ENCODE measurements at regions of chr21 and their contacts with region 1.

Region 1: DNA sequence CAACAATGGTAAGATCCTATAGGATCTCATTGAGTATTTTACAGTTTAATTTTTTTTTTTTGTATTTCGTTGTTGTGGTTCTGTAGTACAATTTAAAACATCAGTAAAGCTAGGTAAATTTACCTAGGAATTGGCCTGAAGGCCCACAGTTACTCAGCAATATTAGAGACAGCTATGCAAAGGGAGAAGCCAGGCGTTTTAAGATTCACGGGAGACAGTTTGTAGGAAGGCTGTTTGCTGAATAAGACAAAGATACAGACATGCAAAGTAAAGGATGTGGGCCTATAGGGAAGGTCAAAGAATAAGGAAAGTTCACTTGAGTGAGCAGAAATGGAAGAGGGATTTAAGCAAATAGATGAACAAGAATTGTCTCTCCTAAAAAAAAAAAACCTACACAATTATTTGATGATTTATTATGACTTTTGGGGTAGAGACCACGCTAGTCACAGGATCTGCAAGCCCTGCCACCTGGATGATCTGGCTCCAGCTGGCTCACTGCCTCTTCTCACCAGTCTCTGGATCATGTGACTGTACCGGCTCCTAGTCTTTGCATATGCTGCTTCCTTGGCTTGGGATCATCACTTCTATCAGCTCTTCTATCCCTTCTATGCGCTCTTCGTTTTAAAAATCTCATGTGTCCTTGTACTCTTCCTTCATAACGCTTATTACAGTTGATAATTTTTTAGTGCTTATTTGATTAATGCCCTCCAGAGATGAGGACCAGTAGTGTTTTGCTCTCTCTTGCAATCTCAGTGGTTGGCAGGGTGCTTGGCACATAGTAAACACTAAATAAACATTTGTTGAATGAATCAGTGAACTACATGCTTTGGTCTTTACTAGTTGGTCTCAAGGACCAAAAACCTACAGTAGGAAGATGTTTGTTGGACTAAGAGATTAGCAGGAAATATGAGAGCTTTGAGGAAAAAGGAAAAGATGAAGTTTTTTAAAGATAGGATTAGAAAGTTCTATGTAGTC is 14.1 kb downstream of the DYRK1A start:
- DNase-seq: no peak
- H3K4me3 Mint-ChIP-seq: no peak overlapping the region
- H3K27ac Mint-ChIP-seq: no peak overlapping the region
- H3K4me1 Mint-ChIP-seq: peaks cover 66% of the 10 kb centered on the region
- H3K27me3 Mint-ChIP-seq: no peaks in the 10 kb centered on the region

Region 2: DNA sequence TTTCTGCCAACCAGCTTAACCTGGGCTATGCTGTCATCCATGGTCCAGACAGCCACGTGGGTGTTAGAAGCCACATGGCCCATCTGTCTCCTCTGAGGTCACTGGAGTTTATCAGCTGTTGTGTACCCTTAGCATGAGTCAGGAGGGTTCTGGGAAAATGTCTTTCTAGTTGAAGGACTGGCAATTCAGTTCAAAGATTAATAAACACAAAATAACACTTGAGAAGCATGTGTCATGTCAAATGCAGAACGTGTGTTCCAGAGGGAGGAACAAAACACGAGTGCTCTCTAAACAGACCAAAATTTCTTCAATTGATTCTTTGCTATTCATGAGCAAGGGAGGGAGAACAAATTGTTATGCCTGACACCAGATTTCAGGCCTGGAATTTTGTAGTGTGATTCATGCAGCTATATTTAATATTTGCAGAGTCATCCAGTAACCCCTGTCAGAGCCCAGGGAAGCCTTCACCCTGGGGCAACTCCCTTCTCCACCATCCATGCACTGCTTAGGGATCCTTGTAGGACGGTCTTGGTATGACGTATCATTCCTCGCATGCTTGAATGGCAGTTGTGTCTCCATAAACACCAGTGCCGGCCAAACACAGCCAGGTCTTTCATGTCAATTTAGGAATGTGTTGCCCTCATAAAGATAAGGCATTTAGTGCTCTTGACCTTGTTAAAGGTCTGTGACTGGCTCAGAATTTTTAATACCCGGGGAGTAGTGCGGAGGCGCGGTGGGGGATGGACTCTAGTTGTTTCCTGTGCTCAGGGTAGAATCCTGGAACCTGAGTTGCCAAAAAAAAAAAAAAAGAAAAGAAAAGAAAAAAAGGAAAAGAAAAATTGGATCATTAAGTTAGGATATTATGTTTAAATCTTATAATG is 41.7 kb before region 1 on chr21:
- intact Hi-C with region 1: no loop called
- DNase-seq: no peak
- H3K4me3 Mint-ChIP-seq: no peak overlapping the region
- H3K27ac Mint-ChIP-seq: no peak overlapping the region
- H3K4me1 Mint-ChIP-seq: peaks cover 3% of the 10 kb centered on the region
- H3K27me3 Mint-ChIP-seq: peaks cover 1% of the 10 kb centered on the region

Region 3: DNA sequence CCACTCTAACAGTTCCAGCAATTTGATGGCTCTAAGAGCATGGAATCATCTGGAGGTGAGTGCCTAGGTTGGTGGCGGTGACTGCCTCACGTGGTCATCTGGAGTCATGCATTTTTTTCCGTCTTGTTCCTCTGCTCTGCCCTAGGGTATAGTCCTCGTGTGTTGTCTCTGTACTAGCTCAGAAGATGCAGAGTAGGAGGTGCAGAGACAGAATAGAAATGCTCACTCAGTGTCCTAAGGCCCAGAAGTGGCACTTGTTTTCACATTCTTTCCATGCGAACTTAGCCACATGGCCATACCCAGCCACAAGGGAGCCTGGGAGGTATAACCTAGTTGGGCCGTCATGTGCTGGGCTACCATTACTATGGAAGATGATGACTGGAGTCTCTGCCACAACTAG is 16.2 kb after region 1 on chr21:
- intact Hi-C with region 1: loop called (anchors 2 kb)
- DNase-seq: no peak
- H3K4me3 Mint-ChIP-seq: no peak overlapping the region
- H3K27ac Mint-ChIP-seq: no peak overlapping the region
- H3K4me1 Mint-ChIP-seq: peaks cover 49% of the 10 kb centered on the region
- H3K27me3 Mint-ChIP-seq: no peaks in the 10 kb centered on the region